Mammary epithelial cell (primary cell): ENCODE measurements at regions of chr1 and their contacts with region 1.

Region 1: DNA sequence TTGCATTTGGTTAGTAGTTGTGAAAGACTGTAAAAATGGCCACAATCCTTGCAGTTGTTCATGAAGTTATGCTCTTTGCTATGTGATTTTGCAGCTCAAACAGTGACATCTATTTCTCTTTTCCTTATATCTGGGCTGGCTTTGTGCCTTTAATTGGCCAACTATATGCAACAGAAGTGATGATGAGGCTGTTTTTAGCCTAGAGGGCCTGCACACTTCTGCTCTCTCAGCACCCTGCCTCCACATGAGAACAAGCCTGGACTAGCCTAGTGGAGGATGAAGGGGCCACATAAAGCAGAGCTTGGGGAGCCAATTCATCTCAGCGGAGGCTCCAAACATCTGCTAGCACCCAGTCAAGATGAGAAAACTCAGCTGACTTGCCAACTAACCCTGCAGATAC is 339.8 kb downstream of the OMA1 start:
- DNase-seq: peak; percentile 20
- H3K4me3 ChIP-seq: no peak overlapping the region
- H3K27ac ChIP-seq: no peak overlapping the region
- H3K4me1 ChIP-seq: no peaks in the 10 kb centered on the region
- H3K27me3 ChIP-seq: no peaks in the 10 kb centered on the region
- CTCF ChIP-seq: no peak

Region 2: DNA sequence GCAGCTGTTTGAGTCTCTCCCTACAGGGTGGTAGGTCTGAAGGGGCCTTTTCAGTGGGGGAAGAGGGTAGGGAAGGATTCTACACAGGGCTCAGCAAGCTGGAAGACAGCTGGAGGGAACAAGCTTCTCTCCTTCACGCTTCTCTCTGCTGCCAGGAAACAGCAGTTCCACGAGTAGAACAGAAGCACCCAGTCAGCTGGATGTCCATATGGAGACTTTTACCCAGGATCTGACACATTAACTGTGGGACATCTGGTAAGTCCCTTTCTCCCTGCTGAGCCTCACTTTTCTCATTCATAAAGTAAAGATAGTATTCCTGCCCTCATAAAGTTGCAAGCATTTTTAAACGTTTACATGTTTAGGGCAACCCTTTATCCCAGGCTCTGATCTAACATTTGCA is 59.5 kb after region 1 on chr1:
- CTCF ChIA-PET with region 1: no interaction called
- dilution Hi-C with region 1: loop called (anchors 5 kb)
- in situ Hi-C with region 1: no loop called
- intact Hi-C with region 1: no loop called
- DNase-seq: no peak
- H3K4me3 ChIP-seq: no peak overlapping the region
- H3K27ac ChIP-seq: no peak overlapping the region
- H3K4me1 ChIP-seq: no peaks in the 10 kb centered on the region
- H3K27me3 ChIP-seq: no peaks in the 10 kb centered on the region
- CTCF ChIP-seq: no peak

Region 3: DNA sequence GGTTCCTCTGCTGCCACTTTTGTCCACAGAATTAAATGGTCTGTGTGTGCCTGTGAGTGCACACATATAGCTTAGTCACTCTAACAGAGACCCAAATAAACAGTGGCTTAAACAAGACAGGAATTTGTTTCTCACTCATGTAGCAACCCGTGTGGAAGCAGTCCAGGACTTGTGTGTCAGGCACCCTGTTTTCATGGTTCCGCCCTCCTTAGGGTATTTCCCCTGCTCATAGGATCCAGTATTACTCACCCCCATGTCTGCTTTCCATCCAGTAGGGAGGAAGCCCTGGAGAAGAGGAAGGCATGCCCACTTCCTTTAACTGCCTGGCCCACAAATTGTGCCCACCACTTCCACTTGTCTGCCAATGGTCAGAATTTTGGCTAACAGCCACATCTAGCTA is 411.6 kb after region 1 on chr1:
- CTCF ChIA-PET with region 1: no interaction called
- dilution Hi-C with region 1: no loop called
- in situ Hi-C with region 1: no loop called
- intact Hi-C with region 1: no loop called
- DNase-seq: peak; percentile 99
- H3K4me3 ChIP-seq: no peak overlapping the region
- H3K27ac ChIP-seq: peak overlapping the region; percentile 84
- H3K4me1 ChIP-seq: peaks cover 24% of the 10 kb centered on the region
- H3K27me3 ChIP-seq: no peaks in the 10 kb centered on the region
- CTCF ChIP-seq: no peak